ENCODE measurements at regions of chr20 and their contacts with region 1.

Region 1: GRCh38 chr20:23419995-23420901 is 1.0 kb downstream of the NAPB start:
- DNase-seq: peak; percentile 6
- H3K4me3 Mint-ChIP-seq: peak overlapping the region; percentile 73
- H3K27ac Mint-ChIP-seq: no peak overlapping the region
- H3K4me1 Mint-ChIP-seq: no peaks in the 10 kb centered on the region
- H3K27me3 Mint-ChIP-seq: no peaks in the 10 kb centered on the region
- CTCF ChIP-seq: no peak

Region 2: DNA sequence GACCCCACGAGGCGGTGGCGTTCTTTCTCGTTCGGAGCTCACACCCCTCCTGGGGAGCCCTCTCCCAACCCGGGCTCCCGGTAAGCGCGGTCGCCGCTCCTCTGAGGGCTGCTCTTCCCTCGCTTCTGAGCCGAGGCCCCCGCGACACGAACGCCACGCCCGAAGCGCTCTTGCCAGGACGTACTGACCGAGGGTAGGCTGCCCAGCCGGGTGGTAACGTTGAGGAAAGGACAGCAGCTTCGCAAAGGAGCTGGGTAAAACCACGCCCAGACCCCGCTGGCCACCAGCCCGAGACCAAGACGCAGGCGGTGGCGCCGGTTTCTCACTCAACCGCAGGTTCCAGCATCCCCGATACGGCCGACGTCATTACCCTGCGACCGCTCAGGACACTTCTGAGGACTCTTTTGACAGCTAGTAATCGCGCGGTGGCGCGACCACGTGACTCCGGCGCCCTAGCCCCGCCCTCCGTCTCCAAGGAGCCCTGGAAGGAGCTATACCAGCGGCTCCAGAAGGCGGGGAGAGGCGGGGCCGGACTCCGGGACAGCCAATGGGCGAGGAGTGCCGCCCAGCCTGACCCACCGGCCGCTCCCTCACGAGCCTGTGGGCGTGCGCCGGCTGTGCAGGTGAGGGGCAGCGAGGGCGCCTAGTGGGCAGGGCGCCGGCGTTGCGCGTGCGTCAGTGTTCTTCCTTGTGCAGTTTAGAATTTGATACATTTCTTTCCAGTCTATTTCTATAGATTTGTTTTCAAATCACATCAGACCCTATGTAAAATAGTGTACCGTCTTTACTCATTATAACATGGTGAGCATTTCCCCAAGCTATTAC is 62.3 kb before region 1 on chr20:
- CTCF ChIA-PET with region 1: no interaction called
- intact Hi-C with region 1: loop called (anchors 10 kb)
- DNase-seq: peak; percentile 92
- H3K4me3 Mint-ChIP-seq: peak overlapping the region; percentile 66
- H3K27ac Mint-ChIP-seq: no peak overlapping the region
- H3K4me1 Mint-ChIP-seq: peaks cover 2% of the 10 kb centered on the region
- H3K27me3 Mint-ChIP-seq: no peaks in the 10 kb centered on the region
- CTCF ChIP-seq: no peak

Measured in Calu3 (cell line).